Right cardiac atrium (tissue), 5 donors: ENCODE measurements at regions of chr9 and their contacts with region 1.

Region 1: DNA sequence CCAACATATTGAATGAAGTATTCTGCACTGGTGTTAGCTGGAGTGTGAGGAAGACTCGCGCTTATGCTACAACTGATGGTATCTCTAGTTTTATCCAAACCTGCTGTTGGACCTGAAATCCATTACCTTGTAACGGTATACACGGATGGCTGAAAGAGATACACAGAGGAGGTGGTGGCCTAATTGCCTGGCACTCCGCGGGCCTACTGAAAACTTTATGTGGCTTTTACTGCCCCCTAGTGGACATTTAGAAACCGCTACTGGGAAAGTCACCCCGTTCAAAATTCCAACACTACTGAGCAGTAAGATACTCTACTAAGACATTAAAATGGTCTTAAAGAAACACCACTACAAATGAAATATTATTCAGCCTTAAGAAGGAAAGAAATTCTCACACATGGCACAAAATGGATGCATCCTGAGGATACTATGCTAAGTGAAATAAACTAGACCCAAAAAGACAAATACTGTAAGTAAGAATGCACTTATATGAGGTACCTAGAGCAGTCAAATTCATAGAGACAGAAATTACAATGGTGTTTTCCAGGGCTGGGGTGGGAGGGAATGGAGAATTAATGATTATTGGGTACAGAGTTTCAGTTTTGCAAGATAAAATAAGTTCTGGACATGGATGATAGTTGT is 100.4 kb downstream of the TTLL11 start:
- DNase-seq: peak; percentile 53 to 86 (median 72)
- ATAC-seq: peak; percentile 74 to 78
- H3K4me3 ChIP-seq: no peak overlapping the region
- H3K27ac ChIP-seq: no peak overlapping the region
- H3K4me1 ChIP-seq: peaks cover 1% of the 10 kb centered on the region
- H3K27me3 ChIP-seq: no peaks in the 10 kb centered on the region

Region 2: GRCh38 chr9:121545875-121546423 is 446.7 kb before region 1 on chr9:
- intact Hi-C with region 1: loop called (anchors 2 to 5 kb)
- DNase-seq: peak; percentile 98 to 99 (median 99)
- ATAC-seq: peak; percentile 92 to 95
- H3K4me3 ChIP-seq: no peak overlapping the region
- H3K27ac ChIP-seq: no peak overlapping the region
- H3K4me1 ChIP-seq: no peaks in the 10 kb centered on the region
- H3K27me3 ChIP-seq: no peaks in the 10 kb centered on the region

Region 3: GRCh38 chr9:121640076-121640475 is 352.6 kb before region 1 on chr9:
- intact Hi-C with region 1: loop called in 1 of 4 experiments (anchors 2 kb)
- DNase-seq: peak; percentile 70 to 89 (median 86)
- ATAC-seq: peak; percentile 73 to 79
- H3K4me3 ChIP-seq: no peak overlapping the region
- H3K27ac ChIP-seq: no peak overlapping the region
- H3K4me1 ChIP-seq: peaks cover 6% of the 10 kb centered on the region
- H3K27me3 ChIP-seq: no peaks in the 10 kb centered on the region

Region 4: DNA sequence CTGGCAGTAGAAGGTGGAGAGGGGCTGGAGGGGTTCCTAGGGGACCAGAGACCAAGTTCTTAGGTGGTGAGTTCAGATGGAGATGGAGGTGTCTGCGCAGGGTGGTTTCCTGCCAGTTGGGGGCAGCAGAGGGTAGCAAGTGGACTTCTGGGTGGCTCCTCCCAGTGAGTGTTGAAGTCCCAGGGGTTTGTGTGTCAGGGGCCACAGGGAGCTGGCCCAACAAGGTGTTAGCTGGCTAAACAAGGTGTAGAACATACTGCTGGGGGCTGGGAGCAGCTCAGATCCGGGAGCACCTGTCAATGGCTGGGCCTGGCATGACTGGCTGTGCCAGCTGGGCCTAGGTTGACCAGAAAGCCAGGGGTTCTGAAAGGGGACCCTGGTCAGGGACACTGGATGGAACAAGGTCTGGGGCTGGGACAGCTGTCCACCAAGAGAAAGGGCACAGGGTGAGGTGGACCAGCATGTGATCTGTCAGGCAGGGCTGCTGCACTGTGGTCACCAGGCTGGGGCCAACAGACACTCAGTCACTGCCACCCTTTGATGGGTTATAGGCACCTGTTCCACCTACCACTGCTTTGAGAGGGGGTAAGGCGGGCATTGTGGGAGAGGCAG is 305.7 kb before region 1 on chr9:
- intact Hi-C with region 1: loop called in 3 of 4 experiments (anchors 5 to 10 kb)
- DNase-seq: peak; percentile 76 to 92 (median 87)
- ATAC-seq: peak; percentile 61 to 68
- H3K4me3 ChIP-seq: no peak overlapping the region
- H3K27ac ChIP-seq: no peak overlapping the region
- H3K4me1 ChIP-seq: peaks cover 6% of the 10 kb centered on the region
- H3K27me3 ChIP-seq: no peaks in the 10 kb centered on the region

Region 5: GRCh38 chr9:121692606-121693387 is 299.9 kb before region 1 on chr9:
- intact Hi-C with region 1: loop called (anchors 5 to 10 kb)
- DNase-seq: peak in 1 of 3 donors; percentile 45
- ATAC-seq: peak; percentile 48 to 81
- H3K4me3 ChIP-seq: no peak overlapping the region
- H3K27ac ChIP-seq: peak overlapping the region; percentile 22
- H3K4me1 ChIP-seq: peaks cover 7% of the 10 kb centered on the region
- H3K27me3 ChIP-seq: no peaks in the 10 kb centered on the region

Region 6: DNA sequence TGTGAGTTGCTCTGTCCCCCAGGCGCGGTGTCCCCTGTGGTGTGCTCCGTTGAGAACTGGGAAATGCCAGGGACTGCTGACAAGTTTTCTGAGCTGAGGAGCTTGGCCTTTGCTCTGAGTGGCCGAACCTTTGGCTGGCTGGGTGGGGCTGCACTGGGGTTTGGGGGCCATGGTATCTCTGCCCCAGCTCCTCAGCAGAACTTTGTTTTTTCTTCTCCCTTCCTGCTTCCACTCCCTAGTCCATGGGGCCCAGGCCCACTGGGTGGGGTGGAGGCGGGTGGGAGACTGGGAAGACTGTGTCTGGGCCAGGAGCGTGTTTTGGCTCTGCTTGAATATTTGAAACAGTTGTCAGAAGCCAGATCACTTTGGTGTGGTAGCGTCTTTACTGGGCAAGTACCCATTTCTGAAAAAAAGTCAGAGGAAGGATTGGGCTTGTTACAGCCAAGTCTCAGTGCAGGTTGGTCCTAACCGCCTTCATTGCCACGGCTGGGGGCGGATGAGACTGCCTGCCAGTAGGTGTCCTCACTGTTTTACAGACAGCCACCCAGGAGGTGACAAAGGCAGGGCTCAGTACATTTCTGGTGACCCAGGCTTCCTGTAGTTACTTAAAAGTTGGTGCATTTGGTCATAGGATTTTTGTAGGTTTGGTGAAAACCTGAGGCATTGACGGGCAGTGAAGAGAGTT is 248.5 kb before region 1 on chr9:
- intact Hi-C with region 1: loop called in 2 of 4 experiments (anchors 5 to 10 kb)
- DNase-seq: peak; percentile 61 to 83 (median 83)
- ATAC-seq: peak; percentile 61 to 67
- H3K4me3 ChIP-seq: peak overlapping the region; percentile 73
- H3K27ac ChIP-seq: peak overlapping the region; percentile 100
- H3K4me1 ChIP-seq: peaks cover 47% of the 10 kb centered on the region
- H3K27me3 ChIP-seq: no peaks in the 10 kb centered on the region

Region 7: DNA sequence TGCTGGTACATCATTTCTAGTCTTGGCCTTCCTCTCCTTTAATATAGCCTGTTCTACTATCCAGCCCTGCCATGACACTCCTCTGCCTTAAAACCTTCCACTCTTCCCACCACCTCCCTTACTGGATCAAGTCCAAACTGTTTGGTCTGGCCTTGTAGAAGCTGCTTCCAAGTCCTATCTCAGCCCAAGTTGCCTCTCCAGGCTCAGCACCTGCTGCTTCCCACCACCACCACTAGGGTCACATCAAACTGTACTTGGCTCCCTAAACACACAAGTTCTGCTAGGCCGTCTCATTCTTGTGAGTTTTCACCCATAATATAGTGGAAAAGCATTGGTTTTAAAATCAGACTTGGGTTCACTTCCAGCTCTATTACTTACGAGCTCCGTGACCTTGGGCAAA is 165.5 kb after region 1 on chr9:
- intact Hi-C with region 1: no loop called
- DNase-seq: no peak
- ATAC-seq: peak in 1 of 2 donors; percentile 31
- H3K4me3 ChIP-seq: peak overlapping the region; percentile 95
- H3K27ac ChIP-seq: no peak overlapping the region
- H3K4me1 ChIP-seq: peaks cover 3% of the 10 kb centered on the region
- H3K27me3 ChIP-seq: no peaks in the 10 kb centered on the region